ENCODE measurements at regions of chr19 and their contacts with region 1.

Region 1: DNA sequence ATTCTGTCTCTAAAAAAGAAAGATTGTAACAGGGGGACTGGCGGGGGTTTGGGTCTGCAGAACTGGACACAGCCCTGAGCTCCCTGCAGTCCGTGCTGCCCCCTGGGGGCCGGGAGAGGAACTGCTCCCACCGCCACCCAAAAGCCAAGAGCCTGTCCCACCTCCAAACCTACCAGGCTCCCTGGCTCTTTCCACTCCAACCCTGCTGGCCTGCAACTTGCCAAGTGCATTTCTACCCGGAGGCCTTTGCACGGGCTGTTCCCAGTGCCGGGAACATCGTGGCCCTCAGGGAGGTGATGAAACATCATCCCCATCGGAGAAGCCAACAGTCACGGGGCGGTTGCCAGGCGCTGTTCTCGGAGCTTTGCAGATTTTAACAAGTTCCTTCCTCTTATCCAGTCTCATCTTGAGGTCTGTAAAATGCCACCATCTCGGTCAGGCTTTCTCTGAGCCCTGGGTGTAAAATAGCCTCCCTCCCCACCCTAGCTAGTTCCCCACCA is 50.7 kb downstream of the SMIM24 start:
- DNase-seq: peak; percentile 92
- ATAC-seq: peak; percentile 91

Region 2: GRCh38 chr19:3333662-3334061 is 96.0 kb before region 1 on chr19:
- intact Hi-C with region 1: loop called (anchors 5 kb)
- DNase-seq: no peak
- ATAC-seq: no peak

Measured in sciatic nerve (tissue), 2 donors.